ENCODE measurements at regions of chr4 and their contacts with region 1.

Region 1: GRCh38 chr4:108834835-108835384 is 72.1 kb upstream of the ETNPPL start:
- DNase-seq: no peak
- H3K4me3 ChIP-seq: no peak overlapping the region
- CTCF ChIP-seq: peak; percentile 55

Region 2: GRCh38 chr4:108693819-108694218 is 141.1 kb before region 1 on chr4:
- CTCF ChIA-PET with region 1: no interaction called
- POLR2A ChIA-PET with region 1: no interaction called
- DNase-seq: no peak
- H3K4me3 ChIP-seq: no peak overlapping the region
- CTCF ChIP-seq: no peak

Region 3: GRCh38 chr4:108854786-108855185 is 19.9 kb after region 1 on chr4:
- CTCF ChIA-PET with region 1: interaction called, 10 read pairs
- POLR2A ChIA-PET with region 1: no interaction called
- DNase-seq: no peak
- H3K4me3 ChIP-seq: no peak overlapping the region
- CTCF ChIP-seq: no peak

Region 4: DNA sequence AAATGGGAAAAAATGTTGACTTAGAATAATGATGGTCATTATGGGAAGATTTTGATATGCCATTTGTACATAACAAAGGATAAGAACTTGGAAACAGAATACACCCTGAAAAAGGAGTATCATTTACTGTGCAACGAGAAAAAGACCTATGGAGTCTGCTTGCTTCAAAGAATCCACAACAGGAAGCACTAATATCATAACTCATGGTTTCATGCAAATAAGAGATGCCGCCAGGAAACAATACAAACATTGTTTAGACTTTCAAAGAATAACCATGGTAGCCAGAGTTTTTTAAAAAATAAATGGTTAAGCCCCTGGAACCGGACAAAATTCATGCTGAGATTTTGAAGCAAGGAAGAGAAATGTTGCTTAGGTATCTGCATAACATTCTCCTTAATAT is 67.9 kb after region 1 on chr4:
- CTCF ChIA-PET with region 1: no interaction called
- POLR2A ChIA-PET with region 1: no interaction called
- DNase-seq: no peak
- H3K4me3 ChIP-seq: no peak overlapping the region
- CTCF ChIP-seq: no peak

Region 5: DNA sequence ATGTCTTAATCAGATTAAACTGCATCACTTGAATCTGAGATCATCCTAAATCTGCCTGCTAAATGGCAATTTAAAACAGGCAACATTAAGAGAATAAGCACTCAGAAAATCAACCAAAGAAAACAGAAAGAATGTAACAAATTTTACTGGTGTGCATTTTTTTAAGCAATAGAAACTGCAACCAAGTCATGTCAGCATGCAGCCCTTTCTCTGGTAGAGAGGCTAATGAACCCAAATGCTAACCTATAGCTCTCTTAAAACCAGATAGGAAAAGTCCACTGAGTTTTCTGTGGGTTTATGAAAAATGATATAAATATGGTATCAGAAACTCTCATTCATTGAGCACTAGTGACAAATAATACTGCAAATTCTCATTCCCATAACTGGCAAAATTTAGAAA is 432.0 kb after region 1 on chr4:
- CTCF ChIA-PET with region 1: no interaction called
- POLR2A ChIA-PET with region 1: no interaction called
- DNase-seq: no peak
- H3K4me3 ChIP-seq: no peak overlapping the region
- CTCF ChIP-seq: no peak

Region 6: GRCh38 chr4:109315818-109316217 is 480.9 kb after region 1 on chr4:
- CTCF ChIA-PET with region 1: interaction called, 29 read pairs
- POLR2A ChIA-PET with region 1: no interaction called
- DNase-seq: no peak
- H3K4me3 ChIP-seq: no peak overlapping the region
- CTCF ChIP-seq: peak; percentile 37

Region 7: DNA sequence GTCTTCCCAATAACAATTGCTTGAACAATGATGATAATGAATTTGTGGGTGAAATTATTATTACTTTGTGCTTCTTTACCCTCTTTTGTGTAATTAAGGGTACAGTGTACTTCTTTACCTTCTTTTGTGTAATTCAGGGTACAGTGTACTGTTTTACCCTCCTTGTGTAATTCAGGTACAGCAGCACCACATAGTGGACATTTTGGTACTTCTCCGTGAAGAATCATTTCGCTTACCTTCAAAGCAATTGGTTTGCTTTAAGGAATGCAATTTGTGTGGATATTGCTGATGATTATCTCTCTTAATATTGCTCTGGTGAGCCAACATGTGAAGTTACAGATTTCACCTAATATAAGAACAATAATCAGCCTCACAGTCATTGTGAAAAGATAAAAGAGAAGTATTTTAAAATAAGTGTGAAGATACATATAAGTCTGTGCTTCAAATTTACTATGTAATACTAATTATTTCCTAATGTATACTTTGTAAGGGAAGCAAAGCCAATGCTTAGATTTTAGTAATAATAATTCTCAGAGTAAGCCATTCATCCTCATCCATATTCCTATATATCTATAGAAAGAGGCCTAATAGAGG is 571.5 kb after region 1 on chr4:
- CTCF ChIA-PET with region 1: interaction called, 12 read pairs
- POLR2A ChIA-PET with region 1: no interaction called
- DNase-seq: peak; percentile 23
- H3K4me3 ChIP-seq: no peak overlapping the region
- CTCF ChIP-seq: peak; percentile 53

Measured in AG04449 (cell line).